ENCODE measurements at regions of chr5 and their contacts with region 1.

Region 1: GRCh38 chr5:181167814-181168488 is 20.6 kb downstream of the OR2V2 start:
- H3K4me3 ChIP-seq: no peak overlapping the region
- H3K27ac ChIP-seq: no peak overlapping the region
- H3K4me1 ChIP-seq: peaks cover 6% of the 10 kb centered on the region
- CTCF ChIP-seq: peak; percentile 63

Region 2: DNA sequence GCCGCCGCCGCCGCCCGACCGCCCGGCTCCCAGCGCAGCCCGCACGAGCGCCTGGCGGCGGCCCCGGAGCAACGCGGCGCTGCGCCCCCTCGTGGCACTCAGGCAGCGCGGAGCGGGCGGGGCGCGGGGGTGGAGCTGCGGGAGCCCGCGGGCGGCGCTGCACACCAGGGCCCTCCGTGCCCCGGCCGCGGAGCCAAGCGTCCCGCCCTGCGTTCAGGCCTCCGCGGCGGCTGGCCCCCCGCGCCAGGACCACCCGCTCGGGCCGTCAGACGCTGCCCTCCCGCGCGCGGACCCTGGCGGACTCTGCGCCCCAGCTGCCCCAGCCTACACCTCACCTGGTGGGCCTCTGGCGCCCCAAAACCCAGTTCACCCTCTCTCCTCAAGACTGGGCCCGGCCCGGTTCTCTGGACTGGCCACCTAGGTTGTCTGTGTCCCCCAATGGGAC is 958.8 kb before region 1 on chr5 and contains the start of gene RASGEF1C:
- CTCF ChIA-PET with region 1: no interaction called
- POLR2A ChIA-PET with region 1: no interaction called
- H3K4me3 ChIP-seq: peak within 1 kb of the TSS; percentile 47
- H3K27ac ChIP-seq: peak within 1 kb of the TSS; percentile 9; the same call in 1 of the 2 replicates
- H3K4me1 ChIP-seq: no peaks in the 10 kb centered on the region; the same call in 1 of the 2 replicates
- CTCF ChIP-seq: no peak

Region 3: GRCh38 chr5:180868960-180869359 is 299.0 kb before region 1 on chr5:
- CTCF ChIA-PET with region 1: interaction called, 10 read pairs
- POLR2A ChIA-PET with region 1: no interaction called
- H3K4me3 ChIP-seq: no peak overlapping the region
- H3K27ac ChIP-seq: no peak overlapping the region
- H3K4me1 ChIP-seq: no peaks in the 10 kb centered on the region
- CTCF ChIP-seq: peak; percentile 59; the same call in 1 of the 2 replicates

Measured in HEK293 (cell line).